Activated T-helper 2 cell treated with anti-CD3 and anti-CD28 coated beads, Interferon-gamma antibody, Interleukin-2, Interleukin-4, amounts not matched to agents 10 μg/mL and 5 μg/mL and 100 μg/mL, durations not matched to agents 14 hours and 24 hours and 36 hours (primary cell): ENCODE measurements at regions of chr5 and their contacts with region 1.

Region 1: DNA sequence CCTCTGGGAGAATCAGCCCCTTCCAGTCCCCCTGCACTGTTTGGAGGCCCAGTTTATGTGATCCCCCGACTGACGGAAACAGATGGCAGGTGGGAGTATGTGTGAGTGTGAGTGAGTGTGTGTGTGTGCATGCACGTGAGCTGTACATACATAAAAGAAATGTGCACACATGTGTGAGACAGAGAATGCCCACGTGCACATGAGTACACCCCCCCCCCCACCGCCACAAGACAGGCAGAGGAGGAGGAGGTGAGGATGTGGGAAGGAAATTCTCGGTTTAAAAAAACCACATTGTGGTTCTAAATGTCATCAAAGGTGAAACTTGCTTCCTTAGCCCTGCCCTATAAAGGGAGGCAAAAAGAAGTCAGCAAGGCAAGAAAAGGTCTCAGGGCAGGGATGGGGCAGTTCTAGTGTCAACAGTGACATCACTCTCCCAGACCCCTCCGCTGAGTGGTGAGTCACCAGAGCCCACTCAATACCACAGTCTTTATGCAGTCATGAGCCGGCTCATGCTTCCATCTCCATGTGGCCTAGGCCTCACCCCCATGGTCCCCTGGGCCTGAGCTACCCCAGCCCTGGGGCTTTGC is 79.2 kb upstream of the HSPA9 start:
- DNase-seq: peak; percentile 53
- H3K4me3 Mint-ChIP-seq: peak overlapping the region; percentile 9
- H3K27ac Mint-ChIP-seq: peak overlapping the region; percentile 91
- H3K4me1 Mint-ChIP-seq: peaks cover 26% of the 10 kb centered on the region
- H3K27me3 Mint-ChIP-seq: peaks cover 78% of the 10 kb centered on the region

Region 2: DNA sequence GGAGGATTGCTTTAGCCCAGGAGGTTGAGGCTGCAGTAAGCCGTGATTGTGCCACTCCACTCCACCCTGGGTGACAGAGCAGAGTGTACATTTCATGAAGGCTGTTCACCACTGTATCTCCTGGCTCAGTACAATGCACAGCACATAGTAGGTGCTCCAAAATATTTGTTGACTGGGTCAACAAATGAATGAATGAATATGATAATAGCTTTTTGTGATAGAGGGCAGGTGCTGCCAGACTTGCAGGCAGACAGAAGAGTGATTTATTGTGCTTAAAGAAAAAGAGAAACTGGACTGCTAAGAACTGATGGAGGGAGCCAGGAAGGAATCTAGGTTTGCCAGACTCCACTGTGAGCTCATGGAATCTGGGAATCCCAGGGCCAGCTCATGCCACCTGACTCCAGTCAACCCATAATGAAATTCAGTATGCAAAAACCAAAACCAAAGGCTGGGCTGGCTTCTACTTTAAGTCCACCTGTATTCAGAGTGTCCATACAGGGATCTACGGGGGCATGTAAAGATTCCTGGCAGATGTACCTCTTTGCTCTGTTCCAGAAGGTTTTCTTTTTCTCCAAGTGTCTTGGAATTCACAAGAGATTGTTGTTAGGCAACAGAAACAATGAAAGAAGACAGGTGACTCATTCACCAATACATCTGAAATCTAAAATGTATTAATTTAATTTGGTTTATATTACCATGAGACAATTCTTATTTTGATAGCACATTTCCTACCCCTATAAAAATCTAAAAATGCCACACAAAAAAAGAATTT is 83.3 kb after region 1 on chr5:
- intact Hi-C with region 1: loop called (anchors 1 kb)
- DNase-seq: no peak
- H3K4me3 Mint-ChIP-seq: no peak overlapping the region
- H3K27ac Mint-ChIP-seq: peak overlapping the region; percentile 92
- H3K4me1 Mint-ChIP-seq: peaks cover 38% of the 10 kb centered on the region
- H3K27me3 Mint-ChIP-seq: peaks cover 10% of the 10 kb centered on the region

Region 3: DNA sequence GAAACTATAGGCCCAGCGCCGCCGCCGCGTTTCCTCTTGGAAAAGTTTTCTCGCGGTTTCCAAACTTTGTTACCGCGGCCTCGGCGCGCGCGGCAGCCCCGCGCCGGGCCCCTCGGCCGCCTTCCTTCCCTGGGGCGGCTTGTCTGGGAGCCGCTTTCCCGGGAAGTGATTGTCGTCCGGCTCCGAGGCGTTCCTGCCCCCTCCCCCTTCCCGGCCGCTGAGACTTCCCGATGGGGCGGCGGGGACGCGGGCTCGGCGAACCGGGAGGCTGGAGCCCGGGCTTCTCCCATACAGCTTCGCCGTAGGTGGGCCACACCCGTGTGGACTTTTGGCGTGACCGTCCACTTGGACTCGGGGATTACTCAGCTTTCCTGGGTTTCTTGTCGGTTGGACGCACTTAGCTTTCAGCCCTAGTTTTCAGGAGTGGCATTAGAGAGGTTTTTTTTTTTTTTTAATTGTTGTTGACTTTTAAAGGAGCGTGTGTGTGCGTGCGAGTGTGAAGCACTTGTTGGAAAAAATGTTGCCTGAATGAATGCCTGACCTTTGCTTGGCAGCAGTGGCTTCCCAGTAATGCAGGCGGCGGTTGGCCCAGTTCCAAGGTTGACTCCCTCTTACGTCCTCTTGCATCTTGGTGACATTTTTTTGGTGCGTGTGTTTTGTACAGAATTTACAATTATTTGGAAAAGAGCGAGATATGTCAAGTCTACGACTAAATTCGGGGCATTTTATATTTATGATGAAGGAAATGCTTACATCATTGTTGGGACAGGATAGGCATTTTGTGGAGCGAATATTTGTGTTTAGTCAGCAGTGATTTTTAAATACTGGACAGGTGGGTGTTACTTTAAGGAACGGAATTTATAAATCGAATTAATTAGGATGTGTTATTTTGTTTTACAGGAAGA is 99.7 kb after region 1 on chr5:
- intact Hi-C with region 1: loop called (anchors 5 kb)
- DNase-seq: peak; percentile 17
- H3K4me3 Mint-ChIP-seq: peak overlapping the region; percentile 95
- H3K27ac Mint-ChIP-seq: peak overlapping the region; percentile 85
- H3K4me1 Mint-ChIP-seq: peaks cover 36% of the 10 kb centered on the region
- H3K27me3 Mint-ChIP-seq: peaks cover 7% of the 10 kb centered on the region

Region 4: DNA sequence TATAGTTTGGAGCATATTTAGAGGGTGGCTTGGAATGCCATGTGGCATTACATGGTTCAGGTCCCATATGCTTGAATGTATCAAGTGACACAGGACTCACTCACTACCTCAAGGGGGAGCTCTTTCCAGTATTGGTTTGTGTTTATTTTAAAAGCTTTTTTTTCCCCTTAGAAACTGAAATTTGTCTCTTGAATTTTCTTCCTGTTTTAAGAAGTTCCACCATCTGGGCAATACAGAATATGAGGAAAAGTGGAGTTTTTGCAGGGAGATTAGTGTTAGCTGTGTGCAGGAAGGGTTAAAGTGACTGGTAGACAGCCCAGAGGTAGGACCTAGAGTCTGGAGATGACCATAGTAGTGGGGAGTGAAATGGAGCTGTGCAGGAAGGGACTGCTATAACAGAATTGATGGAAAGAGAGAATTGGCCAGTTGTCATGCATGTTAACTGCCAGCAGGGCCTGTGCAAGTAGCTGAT is 135.4 kb after region 1 on chr5:
- intact Hi-C with region 1: loop called (anchors 5 kb)
- DNase-seq: no peak
- H3K4me3 Mint-ChIP-seq: no peak overlapping the region
- H3K27ac Mint-ChIP-seq: peak overlapping the region; percentile 24
- H3K4me1 Mint-ChIP-seq: peaks cover 31% of the 10 kb centered on the region
- H3K27me3 Mint-ChIP-seq: peaks cover 1% of the 10 kb centered on the region

Region 5: DNA sequence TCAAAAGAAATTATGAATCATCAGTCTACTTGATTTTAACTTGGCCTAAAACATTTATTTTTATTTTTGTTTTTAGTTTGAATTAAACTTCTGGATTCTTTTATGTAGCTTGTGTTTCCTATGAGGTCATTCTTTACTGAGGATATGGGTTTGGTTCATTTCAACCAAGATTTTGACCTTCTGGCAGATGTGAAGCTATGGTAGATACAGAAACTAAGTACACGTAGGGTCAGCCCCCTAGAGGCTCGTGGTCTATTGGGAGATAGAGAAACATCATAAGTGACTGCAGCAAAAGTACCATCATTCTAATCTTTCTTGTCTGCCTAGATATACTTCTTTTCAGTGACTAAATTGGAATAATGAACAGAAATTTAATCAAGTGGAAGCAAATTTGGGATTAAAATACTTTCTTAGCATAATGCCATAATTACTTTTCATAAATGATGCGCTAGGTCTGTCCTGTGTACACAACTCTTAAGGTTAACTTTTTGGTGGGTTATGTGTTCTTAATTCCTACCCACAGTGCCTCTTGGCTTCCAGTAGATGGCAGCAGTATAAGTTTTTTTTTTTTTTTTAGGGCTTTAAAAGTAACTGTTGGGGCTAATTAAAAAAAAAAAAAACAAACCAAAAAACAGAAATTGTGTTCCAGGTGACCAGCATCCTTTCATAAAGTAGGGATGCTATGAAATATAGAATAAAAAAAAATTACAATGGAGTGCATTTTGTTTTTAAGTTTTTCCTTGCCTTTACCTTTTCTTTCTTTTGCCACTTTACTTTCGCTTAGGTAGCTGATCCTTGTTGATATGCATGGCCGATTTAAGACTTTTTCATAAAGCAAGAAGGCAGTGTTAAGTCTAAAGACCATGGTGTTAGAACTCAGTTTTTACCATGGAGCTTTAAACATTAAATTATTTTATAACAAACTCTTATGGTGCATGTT is 170.8 kb after region 1 on chr5:
- intact Hi-C with region 1: loop called (anchors 1 kb)
- DNase-seq: no peak
- H3K4me3 Mint-ChIP-seq: no peak overlapping the region
- H3K27ac Mint-ChIP-seq: peak overlapping the region; percentile 91
- H3K4me1 Mint-ChIP-seq: peaks cover 30% of the 10 kb centered on the region
- H3K27me3 Mint-ChIP-seq: no peaks in the 10 kb centered on the region

Region 6: DNA sequence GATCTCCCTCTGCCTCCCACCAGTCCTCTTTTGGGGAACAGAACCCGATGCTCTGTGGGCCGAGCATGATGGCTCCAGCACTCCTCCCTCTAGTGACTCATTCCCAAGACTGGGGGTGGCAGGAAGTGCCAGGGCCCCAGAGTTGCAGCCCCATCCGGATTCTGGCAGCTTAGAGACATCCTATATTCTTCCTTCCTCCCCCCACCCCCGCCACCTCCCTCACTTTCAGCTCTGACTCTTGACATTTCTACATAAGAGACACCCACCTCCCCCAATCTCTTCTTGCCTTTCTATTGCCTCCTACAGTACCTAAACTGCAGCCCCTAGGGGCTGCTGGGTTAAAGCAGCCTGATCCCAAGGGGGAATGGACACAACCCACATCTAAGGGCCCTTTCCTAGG is 592.0 kb after region 1 on chr5:
- intact Hi-C with region 1: loop called (anchors 5 kb)
- DNase-seq: peak; percentile 13
- H3K4me3 Mint-ChIP-seq: peak overlapping the region; percentile 17
- H3K27ac Mint-ChIP-seq: peak overlapping the region; percentile 73
- H3K4me1 Mint-ChIP-seq: peaks cover 22% of the 10 kb centered on the region
- H3K27me3 Mint-ChIP-seq: peaks cover 4% of the 10 kb centered on the region

Region 7: GRCh38 chr5:139273572-139274289 is 619.4 kb after region 1 on chr5:
- intact Hi-C with region 1: loop called (anchors 5 kb)
- DNase-seq: peak; percentile 88
- H3K4me3 Mint-ChIP-seq: peak overlapping the region; percentile 94
- H3K27ac Mint-ChIP-seq: peak overlapping the region; percentile 42
- H3K4me1 Mint-ChIP-seq: peaks cover 42% of the 10 kb centered on the region
- H3K27me3 Mint-ChIP-seq: no peaks in the 10 kb centered on the region